ENCODE measurements at regions of chr17 and their contacts with region 1.

Region 1: DNA sequence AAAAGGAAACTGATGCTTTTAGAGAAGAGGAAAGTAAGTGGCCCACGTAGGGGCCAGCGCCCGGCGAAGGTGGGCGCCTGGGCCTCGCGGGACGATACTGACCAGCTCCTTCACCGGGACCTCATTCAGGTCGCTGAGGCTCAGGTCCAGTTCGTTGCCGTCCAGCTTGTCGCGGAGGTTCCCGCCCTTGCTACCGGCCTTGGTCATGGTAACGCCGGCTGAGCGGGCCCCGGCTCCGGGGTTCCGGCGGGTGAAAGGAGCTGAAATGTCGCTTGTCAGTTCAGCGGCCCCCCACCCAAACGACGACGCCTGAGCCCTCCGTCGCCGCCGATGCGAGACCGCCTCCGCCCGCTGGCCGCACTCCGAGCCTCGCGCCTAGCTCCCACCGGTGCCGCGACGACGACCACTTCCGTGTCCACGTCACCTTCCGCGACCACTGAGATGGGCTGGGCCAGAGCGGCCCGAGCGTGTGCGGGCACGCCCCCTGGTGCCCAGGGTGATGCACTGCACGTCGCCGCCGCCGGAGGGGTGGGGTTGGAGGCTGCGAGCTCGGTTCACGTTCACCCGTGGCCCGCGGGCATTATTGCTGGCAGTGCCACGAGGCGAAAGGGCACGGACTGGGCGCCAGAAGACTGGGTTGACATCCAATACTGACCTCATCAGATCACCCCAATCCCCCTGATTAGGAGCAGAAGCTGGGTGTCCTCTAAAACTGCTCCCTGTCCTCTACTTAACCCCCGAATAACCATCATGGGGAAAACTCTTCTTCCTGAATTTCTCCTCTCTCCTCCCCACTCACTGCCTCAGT is at the start of gene LRRC59:
- DNase-seq: peak; percentile 95
- ATAC-seq: peak; percentile 97
- H3K4me3 Mint-ChIP-seq: peak within 1 kb of the TSS; percentile 90
- H3K27ac Mint-ChIP-seq: peak within 1 kb of the TSS; percentile 89
- H3K4me1 Mint-ChIP-seq: peaks cover 33% of the 10 kb centered on the region
- H3K27me3 Mint-ChIP-seq: no peaks in the 10 kb centered on the region
- total RNA-seq, gene LRRC59: 71.5 to 82.6 TPM

Region 2: GRCh38 chr17:50361561-50362480 is 35.5 kb before region 1 on chr17:
- CTCF ChIA-PET with region 1: interaction called, 46 read pairs
- DNase-seq: peak; percentile 77
- ATAC-seq: peak; percentile 82
- H3K4me3 Mint-ChIP-seq: no peak overlapping the region
- H3K27ac Mint-ChIP-seq: peak overlapping the region; percentile 73
- H3K4me1 Mint-ChIP-seq: peaks cover 18% of the 10 kb centered on the region
- H3K27me3 Mint-ChIP-seq: no peaks in the 10 kb centered on the region

Region 3: GRCh38 chr17:50372758-50373556 is 24.4 kb before region 1 on chr17 and contains the starts of genes EME1 and MRPL27:
- CTCF ChIA-PET with region 1: interaction called, 45 read pairs
- DNase-seq: peak; percentile 93
- ATAC-seq: peak; percentile 94
- H3K4me3 Mint-ChIP-seq: peak within 1 kb of the TSS; percentile 94
- H3K27ac Mint-ChIP-seq: peak within 1 kb of the TSS; percentile 99
- H3K4me1 Mint-ChIP-seq: peaks cover 34% of the 10 kb centered on the region
- H3K27me3 Mint-ChIP-seq: no peaks in the 10 kb centered on the region
- total RNA-seq, gene EME1: 34.0 to 40.8 TPM
- total RNA-seq, gene MRPL27: 65.7 to 81.8 TPM

Region 4: DNA sequence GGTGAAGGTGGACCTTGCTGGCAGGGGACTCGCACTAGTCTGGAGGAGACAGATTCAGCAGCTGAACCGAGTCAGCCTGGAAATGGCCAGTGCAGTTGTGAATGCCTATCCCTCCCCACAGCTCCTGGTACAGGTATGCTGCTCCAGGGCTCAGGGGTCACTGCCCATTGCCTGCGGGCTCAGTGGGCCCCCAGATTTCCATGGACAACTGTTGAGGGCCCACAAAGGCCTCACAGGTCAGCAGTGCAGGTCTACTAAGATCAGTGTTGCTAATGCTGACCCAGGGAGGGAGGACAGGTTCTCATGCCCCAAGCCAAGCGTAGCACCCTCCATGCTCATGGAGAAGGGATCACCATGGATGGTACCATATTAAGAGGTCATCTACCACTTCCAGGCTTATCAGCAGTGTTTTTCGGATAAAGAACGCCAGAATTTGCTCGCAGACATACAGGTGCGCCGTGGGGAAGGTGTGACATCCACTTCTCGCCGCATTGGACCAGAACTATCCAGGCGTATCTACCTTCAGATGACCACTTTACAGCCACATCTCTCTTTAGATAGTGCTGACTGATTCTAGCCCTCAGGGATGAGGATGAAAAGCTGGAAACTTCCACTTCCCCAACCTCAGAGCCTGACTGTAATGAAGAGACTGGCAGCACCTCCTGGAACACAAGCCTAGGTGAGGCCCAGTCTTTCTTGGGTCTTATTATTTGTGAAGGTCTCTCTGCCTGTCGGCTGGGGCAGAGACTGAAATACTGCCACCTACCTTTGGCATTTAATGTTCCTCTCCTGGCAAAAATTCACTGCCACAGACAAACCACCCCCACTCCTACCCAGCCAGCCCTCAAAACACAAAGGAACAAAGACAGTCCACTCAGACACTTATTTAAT is 16.7 kb before region 1 on chr17:
- CTCF ChIA-PET with region 1: interaction called, 45 read pairs
- DNase-seq: no peak
- ATAC-seq: no peak
- H3K4me3 Mint-ChIP-seq: no peak overlapping the region
- H3K27ac Mint-ChIP-seq: no peak overlapping the region
- H3K4me1 Mint-ChIP-seq: peaks cover 9% of the 10 kb centered on the region
- H3K27me3 Mint-ChIP-seq: no peaks in the 10 kb centered on the region

Region 5: GRCh38 chr17:50386510-50386909 is 10.8 kb before region 1 on chr17:
- CTCF ChIA-PET with region 1: interaction called, 20 read pairs
- DNase-seq: no peak
- ATAC-seq: no peak
- H3K4me3 Mint-ChIP-seq: no peak overlapping the region
- H3K27ac Mint-ChIP-seq: no peak overlapping the region
- H3K4me1 Mint-ChIP-seq: no peaks in the 10 kb centered on the region
- H3K27me3 Mint-ChIP-seq: no peaks in the 10 kb centered on the region

Region 6: GRCh38 chr17:50425682-50426471 is 28.6 kb after region 1 on chr17 and contains the start of gene ACSF2:
- CTCF ChIA-PET with region 1: interaction called, 55 read pairs
- DNase-seq: peak; percentile 82
- ATAC-seq: peak; percentile 86
- H3K4me3 Mint-ChIP-seq: peak within 1 kb of the TSS; percentile 84
- H3K27ac Mint-ChIP-seq: peak within 1 kb of the TSS; percentile 86
- H3K4me1 Mint-ChIP-seq: peaks cover 33% of the 10 kb centered on the region
- H3K27me3 Mint-ChIP-seq: no peaks in the 10 kb centered on the region
- total RNA-seq, gene ACSF2: 34.6 to 49.4 TPM

Region 7: DNA sequence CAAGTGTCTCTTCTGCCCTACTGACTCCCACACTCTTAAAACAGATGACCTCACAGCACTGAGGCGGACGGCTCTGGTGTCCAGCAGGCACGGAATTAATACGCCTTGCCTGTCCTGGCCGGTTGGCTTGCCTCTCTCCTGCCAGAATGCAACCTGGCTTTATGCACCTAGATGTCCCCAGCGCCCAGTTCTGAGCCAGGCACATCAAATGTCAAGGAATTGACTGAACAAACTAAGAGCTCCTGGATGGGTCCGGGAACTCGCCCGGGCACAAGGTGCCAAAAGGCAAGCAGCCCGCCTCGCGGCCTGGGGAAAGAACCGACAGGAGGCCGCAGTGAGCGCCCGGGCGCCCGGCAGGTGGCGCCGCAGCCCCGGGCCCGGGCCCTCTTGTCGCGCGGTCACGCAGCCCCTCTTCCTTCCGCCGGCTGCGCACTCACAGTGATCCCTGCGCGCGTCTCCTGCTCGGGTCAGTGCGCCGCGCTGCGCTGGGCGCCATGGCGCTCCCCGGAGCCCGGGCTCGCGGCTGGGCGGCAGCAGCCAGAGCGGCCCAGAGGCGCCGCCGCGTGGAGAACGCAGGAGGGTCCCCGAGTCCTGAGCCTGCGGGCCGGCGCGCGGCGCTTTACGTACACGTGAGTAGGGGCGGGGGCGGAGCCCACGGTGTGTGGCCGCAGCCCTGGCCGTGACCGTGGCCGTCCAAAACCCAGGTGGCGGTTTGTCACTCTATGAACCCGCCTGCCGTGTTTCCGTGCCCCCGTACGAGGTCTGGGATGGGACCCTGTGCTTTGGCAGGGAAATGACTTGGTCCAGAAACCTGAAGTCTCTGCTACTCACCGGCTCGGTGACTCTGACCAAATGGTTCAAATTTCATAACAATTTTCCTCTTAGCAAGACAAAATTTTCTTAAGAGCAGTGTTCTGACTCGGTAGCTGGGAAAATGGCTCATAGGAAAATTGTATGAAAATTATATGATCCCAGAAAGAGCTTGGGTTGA is 81.4 kb after region 1 on chr17 and contains the start of gene RSAD1:
- CTCF ChIA-PET with region 1: interaction called, 11 read pairs
- DNase-seq: peak; percentile 89
- ATAC-seq: peak; percentile 95
- H3K4me3 Mint-ChIP-seq: peak within 1 kb of the TSS; percentile 83
- H3K27ac Mint-ChIP-seq: peak within 1 kb of the TSS; percentile 72
- H3K4me1 Mint-ChIP-seq: peaks cover 27% of the 10 kb centered on the region
- H3K27me3 Mint-ChIP-seq: no peaks in the 10 kb centered on the region
- total RNA-seq, gene RSAD1: 30.3 to 33.2 TPM